RWPE1 (cell line): ENCODE measurements at regions of chr11 and their contacts with region 1.

Region 1: DNA sequence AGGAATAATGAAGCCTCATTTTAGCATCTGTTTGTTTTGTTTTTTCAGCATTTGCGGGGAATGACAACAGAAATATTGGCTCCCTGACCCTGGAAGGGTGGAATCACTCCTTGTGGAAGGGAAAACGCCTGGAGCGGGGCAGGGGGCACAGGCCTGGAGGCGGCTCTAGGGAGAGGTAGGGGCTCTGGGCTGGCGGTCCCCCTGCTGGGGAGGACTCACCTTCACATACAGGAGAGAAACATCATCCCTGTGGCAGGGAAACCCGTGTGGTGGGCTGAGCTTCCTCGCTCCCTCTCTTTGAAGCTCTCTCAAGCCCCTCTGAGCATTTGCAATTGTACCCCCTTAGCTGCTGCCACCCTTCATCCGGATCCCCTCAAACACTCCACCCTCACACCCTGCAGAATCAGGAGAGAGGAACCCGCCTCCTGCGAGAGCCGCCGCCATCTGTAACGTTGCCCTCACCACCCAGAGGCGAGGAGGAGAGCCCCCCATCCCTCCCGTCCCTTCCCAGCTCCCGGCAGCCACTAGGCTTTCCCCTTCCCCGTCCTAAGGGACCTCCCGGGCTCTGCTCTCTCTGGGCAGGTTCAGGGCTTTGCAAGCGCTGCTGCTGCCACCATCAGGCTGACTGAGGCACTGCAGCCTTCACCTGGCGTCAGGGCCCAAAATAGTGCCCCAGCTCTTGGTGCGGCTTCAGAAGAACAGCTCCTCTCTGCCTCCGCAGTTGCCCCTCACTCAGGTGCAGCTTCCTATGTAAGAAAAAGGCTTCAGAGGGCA is 10.4 kb downstream of the KIRREL3 start:
- DNase-seq: peak; percentile 57
- H3K27ac ChIP-seq: no peak overlapping the region
- CTCF ChIP-seq: peak; percentile 91

Region 2: DNA sequence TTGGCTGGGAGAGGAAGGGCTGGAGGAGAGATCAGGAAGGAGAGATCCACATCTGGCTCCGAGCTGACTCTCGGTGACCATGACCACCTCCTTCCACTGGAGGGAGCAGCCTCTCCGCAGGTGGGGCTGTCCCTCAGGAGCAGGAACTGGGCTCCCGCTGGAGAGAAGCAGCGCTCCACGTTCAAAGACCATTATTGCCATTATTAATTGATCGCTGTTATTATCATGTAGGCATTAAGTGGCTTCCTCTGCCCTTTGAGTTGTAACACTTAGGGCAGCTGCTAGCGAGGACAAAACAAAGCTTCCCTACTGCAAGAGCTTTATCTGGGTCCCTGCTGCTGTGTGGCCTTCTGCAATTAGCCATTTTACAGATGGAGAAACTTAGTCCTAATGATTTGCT is 382.8 kb before region 1 on chr11:
- CTCF ChIA-PET with region 1: interaction called, 10 read pairs
- POLR2A ChIA-PET with region 1: no interaction called
- DNase-seq: peak; percentile 68
- H3K27ac ChIP-seq: no peak overlapping the region
- CTCF ChIP-seq: peak; percentile 68

Region 3: GRCh38 chr11:126751242-126751641 is 238.9 kb before region 1 on chr11:
- CTCF ChIA-PET with region 1: no interaction called
- POLR2A ChIA-PET with region 1: no interaction called
- DNase-seq: no peak
- H3K27ac ChIP-seq: no peak overlapping the region
- CTCF ChIP-seq: no peak

Region 4: DNA sequence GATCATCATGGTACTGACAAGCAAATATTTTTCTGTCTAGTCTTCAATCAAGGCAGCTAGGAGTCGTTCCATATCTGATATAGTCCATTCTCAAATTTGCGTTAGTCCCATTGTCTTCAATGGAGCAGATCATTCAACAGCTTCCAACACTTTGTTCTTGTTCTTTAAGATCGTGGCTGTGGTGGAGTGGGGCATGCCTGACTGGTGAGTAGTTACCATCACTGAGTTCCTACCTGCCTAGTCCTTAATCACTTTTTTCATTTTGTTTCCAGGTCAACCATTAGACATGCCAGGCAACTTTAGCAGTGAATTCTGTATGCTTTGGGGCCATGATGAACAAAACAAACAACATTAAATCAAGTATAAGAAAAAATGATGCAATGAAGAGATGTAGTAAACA is 703.6 kb after region 1 on chr11:
- CTCF ChIA-PET with region 1: no interaction called
- POLR2A ChIA-PET with region 1: no interaction called
- DNase-seq: no peak
- H3K27ac ChIP-seq: no peak overlapping the region
- CTCF ChIP-seq: no peak